ENCODE measurements at regions of chr3 and their contacts with region 1.

Region 1: DNA sequence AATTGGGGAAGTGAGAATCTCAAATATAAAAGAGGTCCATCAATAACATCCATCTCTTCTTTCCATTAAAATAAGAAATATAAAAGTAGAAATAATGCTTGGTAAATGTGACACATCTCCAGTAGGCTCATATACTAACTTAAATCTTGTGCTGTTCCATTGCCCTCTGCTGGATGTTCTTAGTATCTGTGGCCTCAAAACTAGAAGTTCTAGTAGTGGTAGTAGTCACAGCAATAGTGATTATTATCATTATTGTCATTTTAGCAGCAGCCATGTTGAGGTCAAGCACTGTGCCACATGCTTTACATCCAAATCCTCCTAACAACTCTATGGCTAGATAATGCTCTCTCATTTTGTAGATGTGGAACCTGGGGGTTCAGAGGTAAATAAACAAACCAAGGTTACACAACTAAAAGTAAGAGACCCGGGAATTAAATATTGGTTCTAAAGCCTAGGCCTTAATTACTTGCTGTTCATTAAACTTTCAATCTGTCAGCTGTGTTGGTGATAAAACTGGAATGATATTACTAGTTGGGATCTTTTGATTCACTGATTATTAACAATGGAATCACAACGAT is 20.2 kb upstream of the BTLA start:
- DNase-seq: no peak
- H3K4me3 ChIP-seq: no peak overlapping the region
- H3K27ac ChIP-seq: no peak overlapping the region
- H3K4me1 ChIP-seq: no peaks in the 10 kb centered on the region
- H3K27me3 ChIP-seq: no peaks in the 10 kb centered on the region
- CTCF ChIP-seq: peak; percentile 48 to 85 (median 72)
- POLR2A ChIP-seq: no peak

Region 2: DNA sequence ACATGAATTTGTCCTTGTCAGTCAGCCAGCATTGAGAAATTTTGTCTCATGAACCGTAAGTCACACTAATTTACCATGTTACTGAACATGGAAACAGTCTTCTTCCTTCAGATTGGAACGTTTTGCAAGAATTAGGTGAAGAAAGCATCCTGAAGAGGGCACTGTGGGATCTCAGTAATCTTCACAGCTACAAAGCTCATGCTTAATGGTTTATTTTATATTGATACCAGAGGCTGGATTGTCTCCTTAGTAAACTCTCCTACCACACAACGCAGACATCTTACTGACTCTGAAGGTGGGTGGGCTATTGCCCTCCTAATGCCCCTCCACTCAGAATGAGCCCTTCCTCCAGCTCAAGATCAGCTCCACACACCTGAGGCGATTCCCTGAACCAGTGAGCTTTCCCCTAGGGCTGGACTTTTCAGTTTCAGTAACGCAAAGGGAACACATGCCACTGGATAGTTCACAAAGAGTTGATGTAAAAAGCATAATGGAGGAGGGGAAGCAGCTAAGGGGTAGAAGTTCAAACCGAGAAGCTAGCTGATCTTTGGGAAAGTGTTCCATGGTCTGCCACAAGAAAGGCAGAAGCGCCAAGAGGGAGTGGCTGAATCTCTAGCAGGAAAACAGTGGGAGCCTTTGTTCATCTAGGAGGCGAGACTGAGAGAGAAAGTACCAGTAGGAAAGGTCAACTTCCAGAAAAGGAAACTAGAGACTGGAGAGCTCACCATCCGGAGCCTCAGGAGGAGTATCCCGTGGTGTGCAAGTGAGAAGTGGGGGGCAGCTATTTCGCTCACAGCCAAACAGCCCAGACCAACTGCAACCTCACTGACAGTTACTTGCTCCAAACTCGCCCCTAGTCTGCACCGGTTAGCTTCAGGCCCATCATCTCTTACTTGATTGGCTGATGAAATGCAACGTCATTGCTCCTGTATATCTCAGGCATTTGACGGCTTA is 225.9 kb before region 1 on chr3 and contains the start of gene SLC9C1:
- intact Hi-C with region 1: loop called (anchors 10 kb)
- DNase-seq: no peak
- H3K4me3 ChIP-seq: peak within 1 kb of the TSS; percentile 15 to 61 (median 42)
- H3K27ac ChIP-seq: peak within 1 kb of the TSS; percentile 26 to 80 (median 66)
- H3K4me1 ChIP-seq: peaks cover 0 to 15% (median 0%) of the 10 kb centered on the region in 3 donors
- H3K27me3 ChIP-seq: no peaks in the 10 kb centered on the region
- CTCF ChIP-seq: peak; percentile 54 to 68 (median 55)
- POLR2A ChIP-seq: no peak
- total RNA-seq, gene SLC9C1: not detected

Region 3: DNA sequence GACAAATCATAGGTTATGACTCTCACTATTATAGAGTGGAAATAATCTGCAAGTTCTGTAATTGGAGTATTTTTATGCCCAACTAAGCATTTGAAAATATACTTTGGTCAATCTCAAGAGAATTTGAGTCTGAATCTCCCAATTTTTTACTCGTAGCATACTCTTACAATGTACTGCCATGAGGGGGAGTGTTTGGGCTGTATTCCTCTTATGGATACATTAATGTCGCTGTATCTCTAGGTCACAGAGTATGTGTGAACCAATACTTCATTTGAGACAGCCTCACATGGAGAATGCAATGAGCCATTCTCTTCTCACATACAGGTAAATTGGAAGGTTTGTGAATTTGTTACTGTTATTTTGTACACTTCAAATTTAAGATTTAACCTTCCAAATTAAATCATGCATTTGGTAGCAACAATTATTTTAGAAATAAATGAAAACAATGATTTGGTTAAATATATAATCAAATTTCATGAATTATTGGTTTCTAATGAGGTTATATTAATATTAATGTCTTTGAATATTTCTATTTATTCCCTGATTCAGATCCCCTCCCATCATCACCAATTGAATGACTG is 192.1 kb before region 1 on chr3:
- intact Hi-C with region 1: loop called (anchors 5 kb)
- DNase-seq: no peak
- H3K4me3 ChIP-seq: no peak overlapping the region
- H3K27ac ChIP-seq: no peak overlapping the region
- H3K4me1 ChIP-seq: no peaks in the 10 kb centered on the region
- H3K27me3 ChIP-seq: no peaks in the 10 kb centered on the region
- CTCF ChIP-seq: peak; percentile 56 to 80 (median 64)
- POLR2A ChIP-seq: no peak

Region 4: GRCh38 chr3:112390783-112391641 is 128.5 kb before region 1 on chr3:
- intact Hi-C with region 1: no loop called
- DNase-seq: no peak
- H3K4me3 ChIP-seq: no peak overlapping the region
- H3K27ac ChIP-seq: peak overlapping the region; percentile 45 to 86 (median 82)
- H3K4me1 ChIP-seq: peaks cover 6 to 26% (median 10%) of the 10 kb centered on the region in 3 donors
- H3K27me3 ChIP-seq: no peaks in the 10 kb centered on the region
- CTCF ChIP-seq: no peak
- POLR2A ChIP-seq: no peak

Region 5: DNA sequence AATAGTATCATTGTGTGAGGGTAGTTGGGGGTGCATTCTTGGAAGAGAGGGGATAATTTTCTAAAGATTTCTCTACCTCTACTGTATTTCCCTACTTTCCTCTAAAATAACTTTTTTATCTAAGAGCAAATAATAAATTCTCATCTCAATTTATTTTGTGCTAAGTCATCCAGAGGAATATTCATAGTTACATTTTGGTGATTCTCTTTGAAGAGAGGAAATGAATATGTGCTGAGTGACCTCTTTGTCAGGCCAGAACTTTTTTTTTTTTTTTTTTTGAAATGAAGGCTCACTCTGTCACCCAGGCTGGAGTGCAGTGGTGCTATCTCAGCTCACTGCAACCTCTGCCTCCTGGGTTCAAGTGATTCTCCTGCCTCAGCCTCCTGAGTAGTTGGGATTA is 136.5 kb after region 1 on chr3:
- intact Hi-C with region 1: no loop called
- DNase-seq: no peak
- H3K4me3 ChIP-seq: no peak overlapping the region
- H3K27ac ChIP-seq: no peak overlapping the region
- H3K4me1 ChIP-seq: peaks cover 0 to 12% (median 4%) of the 10 kb centered on the region in 3 donors
- H3K27me3 ChIP-seq: no peaks in the 10 kb centered on the region
- CTCF ChIP-seq: no peak
- POLR2A ChIP-seq: no peak

Region 6: DNA sequence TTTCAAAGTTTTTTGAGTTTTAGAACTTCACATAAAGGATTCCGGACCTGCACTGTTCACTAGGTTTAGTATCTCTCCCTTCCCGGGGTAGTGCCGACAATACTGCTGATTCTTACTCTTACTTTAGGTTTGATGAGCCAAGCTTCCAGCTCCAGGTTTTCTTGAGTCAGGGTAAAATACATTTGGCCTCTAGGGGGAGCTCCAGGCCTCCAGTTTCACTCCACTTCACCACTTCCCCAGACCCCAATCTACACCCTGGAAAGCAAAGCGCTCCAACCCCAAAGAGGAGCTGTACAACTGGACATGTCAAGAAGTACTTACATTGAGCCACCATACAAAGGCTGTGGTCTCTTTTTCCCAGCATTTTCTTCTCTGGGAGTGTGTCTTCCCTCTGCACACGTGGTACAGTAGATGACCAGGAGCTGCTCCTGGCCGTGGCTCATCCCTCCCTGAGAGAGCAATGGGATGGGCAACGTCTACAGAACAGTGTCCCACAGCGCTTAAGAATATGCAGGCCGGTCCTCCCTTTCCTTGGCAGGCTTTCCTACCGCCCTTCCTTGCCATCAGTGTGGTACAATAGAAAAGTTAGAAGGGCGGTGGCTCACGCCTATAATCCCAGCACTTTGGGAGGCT is 215.3 kb after region 1 on chr3:
- intact Hi-C with region 1: no loop called
- DNase-seq: no peak
- H3K4me3 ChIP-seq: no peak overlapping the region
- H3K27ac ChIP-seq: no peak overlapping the region
- H3K4me1 ChIP-seq: peaks cover 0 to 45% (median 5%) of the 10 kb centered on the region in 3 donors
- H3K27me3 ChIP-seq: no peaks in the 10 kb centered on the region
- CTCF ChIP-seq: peak; percentile 68 to 83 (median 75)
- POLR2A ChIP-seq: no peak